Endothelial cell of umbilical vein (primary cell): ENCODE measurements at regions of chr9 and their contacts with region 1.

Region 1: GRCh38 chr9:79129865-79130480 is 441.8 kb upstream of the TLE4 start:
- DNase-seq: peak; percentile 58
- H3K4me3 ChIP-seq: no peak overlapping the region
- H3K27ac ChIP-seq: no peak overlapping the region
- H3K4me1 ChIP-seq: no peaks in the 10 kb centered on the region
- H3K27me3 ChIP-seq: no peaks in the 10 kb centered on the region
- CTCF ChIP-seq: peak; percentile 80 to 86
- POLR2A ChIP-seq: no peak

Region 2: DNA sequence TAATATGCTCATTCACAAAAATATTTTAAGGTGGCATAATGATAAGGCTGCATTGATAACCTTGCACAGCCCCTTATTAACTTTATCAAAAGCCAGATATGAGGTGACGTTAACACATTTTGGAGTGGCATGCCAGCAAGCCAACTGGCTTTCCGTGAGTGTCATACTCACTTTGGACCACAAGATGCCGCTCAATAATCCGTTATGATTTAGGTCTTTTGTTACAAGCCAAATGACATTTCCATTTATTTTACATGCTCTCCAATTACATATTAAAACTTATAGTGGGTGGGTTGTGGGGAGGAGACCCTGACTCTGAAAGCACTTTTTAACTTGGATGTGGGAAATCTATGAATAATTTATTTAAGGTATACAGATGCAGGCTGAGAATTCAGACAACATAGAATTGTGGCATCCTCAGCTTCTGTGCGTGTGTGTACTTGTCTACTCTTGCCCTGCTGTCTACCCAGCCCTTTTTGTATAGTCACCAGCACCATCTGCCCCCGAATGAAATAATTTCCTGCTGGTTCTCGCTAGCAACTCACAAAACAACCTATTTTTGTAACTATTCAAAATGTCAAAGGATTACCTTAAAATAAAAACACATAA is 527.9 kb before region 1 on chr9:
- CTCF ChIA-PET with region 1: interaction called, 40 read pairs
- POLR2A ChIA-PET with region 1: no interaction called
- dilution Hi-C with region 1: no loop called
- intact Hi-C with region 1: loop called (anchors 1 kb)
- DNase-seq: peak; percentile 70
- H3K4me3 ChIP-seq: no peak overlapping the region
- H3K27ac ChIP-seq: no peak overlapping the region
- H3K4me1 ChIP-seq: peaks cover 10% of the 10 kb centered on the region
- H3K27me3 ChIP-seq: peaks cover 2 to 7% of the 10 kb centered on the region in 2 experiments
- CTCF ChIP-seq: peak; percentile 72 to 81
- POLR2A ChIP-seq: no peak

Region 3: GRCh38 chr9:78958892-78959291 is 171.1 kb before region 1 on chr9:
- CTCF ChIA-PET with region 1: no interaction called
- POLR2A ChIA-PET with region 1: no interaction called
- dilution Hi-C with region 1: no loop called
- intact Hi-C with region 1: loop called (anchors 1 kb)
- DNase-seq: no peak
- H3K4me3 ChIP-seq: no peak overlapping the region
- H3K27ac ChIP-seq: no peak overlapping the region
- H3K4me1 ChIP-seq: no peaks in the 10 kb centered on the region
- H3K27me3 ChIP-seq: no peaks in the 10 kb centered on the region
- CTCF ChIP-seq: peak; percentile 4 to 20
- POLR2A ChIP-seq: no peak

Region 4: GRCh38 chr9:79193001-79193400 is 63.0 kb after region 1 on chr9:
- CTCF ChIA-PET with region 1: no interaction called
- POLR2A ChIA-PET with region 1: no interaction called
- dilution Hi-C with region 1: no loop called
- intact Hi-C with region 1: no loop called
- DNase-seq: no peak
- H3K4me3 ChIP-seq: no peak overlapping the region
- H3K27ac ChIP-seq: no peak overlapping the region
- H3K4me1 ChIP-seq: no peaks in the 10 kb centered on the region
- H3K27me3 ChIP-seq: no peaks in the 10 kb centered on the region
- CTCF ChIP-seq: no peak
- POLR2A ChIP-seq: no peak

Region 5: GRCh38 chr9:79233542-79233941 is 103.6 kb after region 1 on chr9:
- CTCF ChIA-PET with region 1: interaction called, 3 read pairs
- POLR2A ChIA-PET with region 1: no interaction called
- dilution Hi-C with region 1: no loop called
- intact Hi-C with region 1: loop called (anchors 5 kb)
- DNase-seq: peak; percentile 34
- H3K4me3 ChIP-seq: no peak overlapping the region
- H3K27ac ChIP-seq: no peak overlapping the region
- H3K4me1 ChIP-seq: no peaks in the 10 kb centered on the region
- H3K27me3 ChIP-seq: peaks cover 0 to 3% of the 10 kb centered on the region in 2 experiments
- CTCF ChIP-seq: peak; percentile 42 to 54
- POLR2A ChIP-seq: no peak